GM18951 (cell line): ENCODE measurements at regions of chr1 and their contacts with region 1.

Region 1: GRCh38 chr1:205255941-205256780 is 28.4 kb downstream of the TMCC2 start:
- POLR2A ChIP-seq: no peak

Region 2: DNA sequence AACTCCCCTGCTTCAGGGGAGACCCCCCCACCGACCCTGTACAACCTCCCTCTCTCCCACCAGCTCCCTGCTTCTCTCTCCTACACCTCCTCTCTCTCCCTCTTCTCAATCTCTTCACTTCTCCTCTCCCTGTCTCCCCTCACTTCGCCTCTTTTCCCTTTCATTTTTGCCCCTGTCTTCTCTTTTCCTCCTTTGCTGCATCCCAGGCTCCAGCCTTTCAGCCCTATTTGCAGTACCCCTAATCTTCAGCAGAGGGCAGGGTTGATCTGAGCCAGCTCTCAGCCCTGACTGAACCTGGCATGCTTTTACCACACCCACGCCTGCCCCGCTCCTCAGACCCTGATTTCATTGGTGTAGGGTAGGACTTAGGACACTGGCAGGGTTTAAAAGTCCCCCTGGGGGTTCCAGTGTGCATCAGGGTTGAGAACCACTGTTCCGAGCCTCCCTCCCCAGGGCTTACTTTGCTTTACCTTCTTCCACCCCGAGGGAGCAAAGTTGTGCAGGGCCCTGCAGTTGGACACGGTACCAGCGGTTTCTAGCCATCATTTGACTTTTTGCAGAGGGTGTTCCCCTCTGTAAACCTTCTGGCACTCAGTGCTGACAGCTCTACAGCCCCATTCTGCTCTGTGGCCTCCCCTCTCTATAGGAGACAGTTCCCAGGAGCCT is 280.5 kb before region 1 on chr1:
- in situ Hi-C with region 1: loop called (anchors 10 kb)
- POLR2A ChIP-seq: no peak

Region 3: DNA sequence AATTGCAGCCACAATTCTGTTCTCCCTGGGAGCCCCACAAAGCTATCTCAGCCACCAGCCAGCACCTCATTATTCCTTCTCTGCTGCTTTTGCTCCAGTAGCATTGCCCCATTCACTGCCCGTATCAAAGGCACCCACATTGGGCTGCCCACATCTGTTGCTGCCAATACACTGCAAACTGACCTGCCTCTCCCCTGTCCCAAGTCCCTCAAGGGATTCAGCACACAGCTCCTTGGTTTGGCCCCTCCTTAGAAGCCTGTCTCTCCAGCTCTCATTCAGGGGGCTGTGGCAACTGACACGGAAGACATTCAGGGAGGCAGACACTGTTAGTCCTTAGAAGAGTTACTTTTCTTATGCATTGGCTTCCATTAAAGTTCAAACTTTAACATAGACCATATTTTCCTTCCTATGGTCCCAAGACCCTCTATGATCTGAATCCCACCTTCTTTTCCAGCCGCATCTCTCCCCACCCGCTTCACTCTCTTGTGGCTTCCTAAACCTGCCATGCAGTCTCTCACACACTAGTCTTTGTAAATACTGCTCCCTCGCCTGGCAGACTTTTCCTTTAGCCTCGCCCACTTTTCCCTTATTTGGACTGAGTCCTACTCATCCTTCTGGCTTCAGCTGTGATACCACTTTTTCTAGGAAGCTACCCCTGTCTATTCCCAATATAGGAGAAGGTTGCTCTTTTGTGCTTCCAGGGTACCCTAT is 119.8 kb after region 1 on chr1:
- in situ Hi-C with region 1: no loop called
- POLR2A ChIP-seq: no peak